Prostate gland (tissue), 2 donors: ENCODE measurements at regions of chr1 and their contacts with region 1.

Region 1: DNA sequence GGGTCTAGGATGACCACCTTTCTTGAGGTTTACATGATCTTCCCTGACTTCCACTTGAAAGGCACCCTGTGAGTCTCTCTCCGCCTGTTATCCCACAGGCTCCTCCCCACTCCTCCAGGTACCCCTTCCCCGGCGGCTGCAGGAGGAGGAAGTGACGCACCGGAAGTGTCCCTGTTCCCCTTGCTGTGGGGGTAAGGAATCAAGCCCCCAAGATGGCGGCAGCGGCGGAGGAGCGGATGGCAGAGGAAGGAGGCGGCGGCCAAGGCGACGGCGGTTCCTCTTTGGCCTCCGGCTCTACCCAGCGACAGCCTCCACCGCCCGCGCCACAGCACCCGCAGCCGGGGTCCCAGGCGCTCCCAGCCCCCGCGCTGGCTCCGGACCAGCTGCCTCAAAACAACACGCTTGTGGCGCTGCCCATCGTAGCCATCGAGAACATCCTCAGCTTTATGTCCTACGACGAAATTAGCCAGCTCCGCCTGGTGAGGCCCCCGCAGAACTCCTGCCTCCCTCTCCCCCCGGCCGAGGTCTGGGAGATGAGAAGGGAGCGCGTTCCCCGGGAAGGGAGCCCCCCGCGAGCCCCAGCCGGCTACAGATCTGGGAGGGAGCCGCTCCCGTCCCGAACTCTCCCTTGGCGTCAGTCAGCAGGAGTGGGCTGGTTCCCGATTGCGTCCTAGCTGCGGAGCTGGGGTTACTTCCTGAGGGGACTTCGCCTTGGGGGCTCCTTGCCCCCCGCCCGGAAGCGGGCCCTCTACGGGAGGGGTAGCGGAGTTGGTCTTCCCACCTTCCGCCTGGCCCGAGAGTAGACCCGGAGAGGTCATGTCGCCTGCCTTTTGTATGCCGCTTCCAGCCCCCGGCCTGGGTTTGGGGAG is at the start of gene FBXO28:
- DNase-seq: peak; percentile 95
- H3K4me3 ChIP-seq: peak within 1 kb of the TSS; percentile 79 to 96
- H3K27ac ChIP-seq: peak within 1 kb of the TSS; percentile 95 to 97
- H3K4me1 ChIP-seq: peaks cover 4% of the 10 kb centered on the region
- H3K27me3 ChIP-seq: no peaks in the 10 kb centered on the region
- CTCF ChIP-seq: no peak
- POLR2A ChIP-seq: peak; percentile 92
- total RNA-seq, gene FBXO28: 29.0 to 40.0 TPM

Region 2: DNA sequence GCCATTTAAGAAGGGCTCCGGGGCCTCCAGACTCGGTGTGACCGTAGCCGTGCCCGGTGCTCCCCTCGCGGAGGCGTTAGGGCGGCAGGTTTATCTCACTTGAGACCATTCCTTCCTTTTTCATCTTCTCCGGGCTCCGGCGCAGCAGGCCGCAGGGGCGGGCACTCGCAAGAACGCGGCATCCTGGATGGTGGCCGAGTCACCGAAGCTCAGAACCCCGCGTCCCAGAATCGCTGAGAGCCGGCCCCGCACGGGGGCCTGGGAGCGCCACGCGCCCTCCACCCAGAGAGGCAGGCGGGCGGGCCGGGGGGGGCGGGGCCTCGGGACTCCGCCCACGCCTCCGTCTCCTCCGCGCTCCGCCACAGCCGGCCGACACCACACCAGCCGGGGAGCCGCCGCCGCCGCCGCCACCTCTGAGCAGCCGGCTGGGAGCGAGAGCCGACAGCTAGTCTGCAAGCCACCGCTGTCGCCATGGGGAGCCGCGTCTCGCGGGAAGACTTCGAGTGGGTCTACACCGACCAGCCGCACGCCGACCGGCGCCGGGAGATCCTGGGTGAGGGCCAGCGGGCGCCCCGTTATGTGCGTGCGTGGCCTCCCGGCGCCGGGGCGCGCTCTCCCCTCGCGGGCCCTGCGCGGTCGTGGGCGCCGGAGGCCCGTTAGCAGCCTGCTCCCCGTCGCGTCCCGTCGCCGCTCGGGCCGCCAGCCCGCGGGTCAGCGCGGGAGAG is 68.9 kb after region 1 on chr1 and contains the start of gene DEGS1:
- intact Hi-C with region 1: loop called (anchors 10 kb)
- DNase-seq: peak; percentile 79
- H3K4me3 ChIP-seq: peak within 1 kb of the TSS; percentile 92 to 99
- H3K27ac ChIP-seq: peak within 1 kb of the TSS; percentile 94 to 98
- H3K4me1 ChIP-seq: peaks cover 3% of the 10 kb centered on the region
- H3K27me3 ChIP-seq: no peaks in the 10 kb centered on the region
- CTCF ChIP-seq: peak in 2 of 4 experiments; percentile 12 to 32
- POLR2A ChIP-seq: peak; percentile 98
- total RNA-seq, gene DEGS1: 78.8 to 172 TPM